ENCODE measurements at regions of chr18 and their contacts with region 1.

Region 1: GRCh38 chr18:2655178-2655953 is at the start of gene SMCHD1:
- DNase-seq: peak; percentile 87
- H3K4me3 Mint-ChIP-seq: peak within 1 kb of the TSS; percentile 95
- H3K27ac Mint-ChIP-seq: peak within 1 kb of the TSS; percentile 96
- H3K4me1 Mint-ChIP-seq: peaks cover 26% of the 10 kb centered on the region
- H3K27me3 Mint-ChIP-seq: peaks cover 1% of the 10 kb centered on the region
- total RNA-seq, gene SMCHD1: 162 TPM

Region 2: GRCh38 chr18:2589345-2590068 is 65.9 kb before region 1 on chr18:
- CTCF ChIA-PET with region 1: no interaction called
- POLR2A ChIA-PET with region 1: interaction called, 48 read pairs
- DNase-seq: no peak
- H3K4me3 Mint-ChIP-seq: no peak overlapping the region
- H3K27ac Mint-ChIP-seq: peak overlapping the region; percentile 71
- H3K4me1 Mint-ChIP-seq: peaks cover 45% of the 10 kb centered on the region
- H3K27me3 Mint-ChIP-seq: no peaks in the 10 kb centered on the region

Region 3: DNA sequence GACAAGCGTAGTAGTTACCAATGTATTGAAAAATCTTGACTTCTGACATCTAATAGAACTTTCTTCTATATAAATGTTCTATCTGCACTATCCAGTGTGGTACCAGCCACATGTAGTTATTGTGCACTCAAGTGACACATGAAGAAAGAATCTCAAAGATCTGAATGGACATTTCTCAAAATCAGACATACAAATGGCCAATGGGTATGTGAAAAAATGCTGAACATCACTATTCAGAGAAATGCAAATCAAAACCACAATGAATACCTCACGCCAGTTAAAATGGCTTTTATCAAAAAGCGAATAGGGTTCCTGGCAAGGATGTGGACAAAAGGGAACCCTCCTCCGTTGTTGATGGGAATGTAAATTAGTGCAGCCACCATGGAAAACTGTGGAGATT is 37.4 kb before region 1 on chr18:
- CTCF ChIA-PET with region 1: no interaction called
- POLR2A ChIA-PET with region 1: interaction called, 11 read pairs
- DNase-seq: no peak
- H3K4me3 Mint-ChIP-seq: no peak overlapping the region
- H3K27ac Mint-ChIP-seq: no peak overlapping the region
- H3K4me1 Mint-ChIP-seq: no peaks in the 10 kb centered on the region
- H3K27me3 Mint-ChIP-seq: no peaks in the 10 kb centered on the region

Region 4: DNA sequence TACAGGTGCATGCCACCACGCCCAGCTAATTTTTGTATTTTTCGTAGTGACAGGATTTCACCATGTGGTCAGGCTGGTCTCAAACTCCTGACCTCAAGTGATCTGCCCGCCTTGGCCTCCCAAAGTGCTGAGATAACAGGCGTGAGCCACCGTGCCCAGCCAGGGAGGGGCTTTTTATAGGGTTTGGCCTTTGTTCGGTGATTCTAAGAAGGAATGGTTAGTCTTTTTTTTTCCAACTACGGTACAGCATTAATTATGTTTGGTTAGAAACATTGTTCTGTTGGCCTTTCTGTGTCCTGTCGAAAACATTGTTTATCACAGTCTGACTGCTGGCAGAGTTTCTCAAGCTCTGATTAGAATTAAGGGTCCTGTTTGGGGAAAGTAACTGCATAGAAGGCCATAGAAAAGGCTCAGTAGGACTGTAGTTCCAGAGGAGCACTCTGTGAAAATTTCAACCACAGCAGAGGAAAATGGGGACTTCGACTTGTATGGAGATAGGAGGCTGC is 19.2 kb before region 1 on chr18:
- CTCF ChIA-PET with region 1: interaction called, 19 read pairs
- POLR2A ChIA-PET with region 1: interaction called, 486 read pairs
- DNase-seq: peak; percentile 30
- H3K4me3 Mint-ChIP-seq: peak overlapping the region; percentile 68
- H3K27ac Mint-ChIP-seq: peak overlapping the region; percentile 100
- H3K4me1 Mint-ChIP-seq: peaks cover 69% of the 10 kb centered on the region
- H3K27me3 Mint-ChIP-seq: no peaks in the 10 kb centered on the region

Region 5: DNA sequence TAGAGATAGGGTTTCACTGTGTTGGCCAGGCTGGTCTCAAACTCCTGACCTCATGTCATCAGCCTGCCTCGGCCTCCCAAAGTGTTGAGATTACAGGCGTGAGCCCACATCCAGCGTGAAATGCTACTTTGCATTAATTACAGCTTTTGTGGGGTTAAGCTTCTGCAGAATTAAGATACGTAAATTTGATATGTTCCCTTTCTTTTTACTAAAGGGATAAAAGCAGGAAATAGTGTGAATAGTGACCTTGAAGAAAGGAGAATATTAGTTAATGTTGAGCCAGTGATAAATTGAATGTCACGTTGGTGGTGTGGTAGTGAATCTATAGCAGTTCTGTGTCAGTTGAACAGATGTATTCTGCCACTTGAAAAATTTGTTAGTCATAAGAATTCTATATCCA is 17.0 kb after region 1 on chr18:
- CTCF ChIA-PET with region 1: interaction called, 3 read pairs
- POLR2A ChIA-PET with region 1: interaction called, 32 read pairs
- DNase-seq: no peak
- H3K4me3 Mint-ChIP-seq: no peak overlapping the region
- H3K27ac Mint-ChIP-seq: no peak overlapping the region
- H3K4me1 Mint-ChIP-seq: peaks cover 51% of the 10 kb centered on the region
- H3K27me3 Mint-ChIP-seq: no peaks in the 10 kb centered on the region

Region 6: DNA sequence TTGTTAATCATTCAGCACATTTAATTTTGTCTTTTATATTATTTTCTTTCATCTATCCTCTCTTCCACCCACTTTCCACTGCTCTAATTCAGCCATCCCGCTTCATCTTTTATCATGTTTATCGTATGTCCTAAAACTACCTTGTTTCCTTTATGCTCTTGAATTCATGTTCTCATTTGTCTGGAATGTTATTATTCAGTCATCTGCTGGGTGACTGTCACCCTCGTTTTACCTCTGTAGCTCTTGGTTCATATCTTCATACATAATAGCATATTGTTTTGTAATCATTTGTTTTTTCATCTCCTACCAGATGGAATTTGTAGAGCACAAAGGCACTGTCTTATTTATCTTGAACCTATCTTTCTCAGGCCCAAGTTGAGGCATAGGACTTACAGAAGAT is 37.1 kb after region 1 on chr18:
- CTCF ChIA-PET with region 1: interaction called, 5 read pairs
- POLR2A ChIA-PET with region 1: interaction called, 22 read pairs
- DNase-seq: no peak
- H3K4me3 Mint-ChIP-seq: no peak overlapping the region
- H3K27ac Mint-ChIP-seq: no peak overlapping the region
- H3K4me1 Mint-ChIP-seq: peaks cover 23% of the 10 kb centered on the region
- H3K27me3 Mint-ChIP-seq: no peaks in the 10 kb centered on the region

Measured in activated CD4-positive, alpha-beta memory T cell treated with anti-CD3 and anti-CD28 coated beads, Interleukin-2, amount 10 ng/mL, durations not matched to agents 7 days and 5 days (primary cell).